Sigmoid colon (tissue), 7 donors: ENCODE measurements at regions of chr18 and their contacts with region 1.

Region 1: GRCh38 chr18:44943311-44943881 is 262.7 kb downstream of the SETBP1 start:
- DNase-seq: no peak
- H3K4me3 ChIP-seq: no peak overlapping the region
- H3K27ac ChIP-seq: peak overlapping the region in 2 of 4 donors; percentile 12 to 21
- H3K4me1 ChIP-seq: peaks cover 0 to 44% (median 35%) of the 10 kb centered on the region in 4 donors
- H3K27me3 ChIP-seq: no peaks in the 10 kb centered on the region
- CTCF ChIP-seq: no peak
- EP300 ChIP-seq: no peak
- POLR2A ChIP-seq: no peak

Region 2: DNA sequence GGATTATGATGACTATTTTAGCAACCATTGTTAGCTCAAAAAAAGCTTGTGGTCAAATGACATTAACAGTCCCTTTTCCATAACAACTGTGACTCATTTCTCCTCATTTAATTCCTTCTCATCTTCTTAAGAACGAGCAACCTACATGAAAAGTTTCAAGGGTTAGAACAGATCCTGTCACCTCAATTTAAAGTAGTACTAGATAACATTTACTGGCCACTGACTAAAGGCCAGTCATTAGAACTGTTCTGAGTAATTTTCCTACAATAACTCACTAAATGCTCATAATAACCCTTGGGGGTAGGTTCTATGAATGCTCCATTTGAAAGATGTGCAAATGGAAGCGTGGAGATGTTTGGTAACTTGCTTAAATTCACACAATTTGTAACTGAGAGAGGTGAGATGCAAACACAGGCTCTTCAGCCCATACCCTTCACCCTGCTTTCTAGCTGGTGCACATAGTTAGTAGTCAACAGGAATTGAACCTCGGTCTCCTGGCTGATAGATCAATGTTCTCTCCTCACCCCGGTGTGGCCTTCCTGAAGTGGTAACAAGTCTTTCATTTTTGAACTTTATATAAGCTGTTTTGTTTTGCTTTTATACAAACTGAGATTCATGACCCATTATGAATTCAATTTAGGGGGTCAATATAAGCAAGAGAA is 50.2 kb before region 1 on chr18:
- intact Hi-C with region 1: loop called (anchors 5 kb)
- DNase-seq: no peak
- H3K4me3 ChIP-seq: no peak overlapping the region
- H3K27ac ChIP-seq: no peak overlapping the region
- H3K4me1 ChIP-seq: peaks cover 0 to 27% (median 24%) of the 10 kb centered on the region in 4 donors
- H3K27me3 ChIP-seq: no peaks in the 10 kb centered on the region
- CTCF ChIP-seq: no peak
- EP300 ChIP-seq: no peak
- POLR2A ChIP-seq: no peak

Region 3: GRCh38 chr18:45008694-45009413 is 65.5 kb after region 1 on chr18:
- intact Hi-C with region 1: loop called (anchors 10 kb)
- DNase-seq: no peak
- H3K4me3 ChIP-seq: no peak overlapping the region
- H3K27ac ChIP-seq: peak overlapping the region in 1 of 4 donors; percentile 15
- H3K4me1 ChIP-seq: peaks cover 0 to 78% (median 40%) of the 10 kb centered on the region in 4 donors
- H3K27me3 ChIP-seq: no peaks in the 10 kb centered on the region
- CTCF ChIP-seq: no peak
- EP300 ChIP-seq: no peak
- POLR2A ChIP-seq: no peak